PC-9 (cell line): ENCODE measurements at regions of chr7 and their contacts with region 1.

Region 1: GRCh38 chr7:12771378-12771877 is 84.0 kb downstream of the ARL4A start:
- DNase-seq: no peak
- H3K4me3 ChIP-seq: no peak overlapping the region
- H3K27ac ChIP-seq: no peak overlapping the region
- H3K4me1 ChIP-seq: no peaks in the 10 kb centered on the region
- H3K27me3 ChIP-seq: no peaks in the 10 kb centered on the region
- CTCF ChIP-seq: no peak

Region 2: GRCh38 chr7:11274074-11274473 is 1497.4 kb before region 1 on chr7:
- CTCF ChIA-PET with region 1: interaction called, 11 read pairs
- POLR2A ChIA-PET with region 1: no interaction called
- intact Hi-C with region 1: no loop called
- DNase-seq: no peak
- H3K4me3 ChIP-seq: no peak overlapping the region
- H3K27ac ChIP-seq: no peak overlapping the region
- H3K4me1 ChIP-seq: no peaks in the 10 kb centered on the region
- H3K27me3 ChIP-seq: no peaks in the 10 kb centered on the region
- CTCF ChIP-seq: no peak

Region 3: DNA sequence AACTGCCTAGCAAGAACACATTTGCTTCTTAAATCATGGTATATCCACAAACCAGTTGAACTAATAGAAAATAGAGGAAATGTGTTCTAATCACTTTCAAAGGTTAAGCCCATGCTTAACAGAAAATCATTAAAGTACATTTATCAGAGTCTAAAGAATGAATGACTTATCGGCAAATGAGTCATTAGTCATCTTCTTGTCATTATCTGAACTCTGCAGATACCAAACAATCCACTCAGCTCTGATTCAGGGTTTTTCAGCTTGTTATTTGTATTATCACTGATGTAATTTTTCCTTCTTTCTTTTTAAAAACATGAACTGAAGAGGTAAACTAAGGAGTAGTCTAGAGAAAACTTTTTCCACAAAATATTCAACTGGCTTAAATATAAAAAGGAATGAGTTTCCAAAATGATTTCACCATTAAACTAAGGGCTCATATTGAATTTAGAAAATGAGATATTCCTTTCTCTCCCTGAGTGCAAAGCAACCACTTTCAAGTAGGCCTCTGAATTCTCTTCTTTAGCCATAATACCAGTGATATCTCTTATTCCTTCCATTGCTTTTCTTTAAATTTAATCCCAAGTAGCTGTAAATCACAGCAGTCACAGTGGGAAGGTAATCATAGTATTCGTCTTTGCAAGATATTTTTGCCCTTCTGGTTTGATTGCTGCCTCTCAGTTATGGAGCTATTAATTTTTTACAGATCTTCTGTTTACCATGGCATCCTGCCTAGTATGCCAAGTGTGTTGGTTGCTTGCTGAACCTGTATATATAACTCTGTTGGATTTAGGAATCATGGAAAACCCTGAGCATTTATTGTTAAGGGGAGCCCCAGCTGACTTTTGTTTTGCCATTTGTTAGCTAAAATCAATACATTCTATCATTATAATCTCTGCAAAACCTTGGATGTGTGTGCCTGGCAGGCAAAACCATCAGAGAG is 1064.5 kb before region 1 on chr7:
- CTCF ChIA-PET with region 1: no interaction called
- POLR2A ChIA-PET with region 1: interaction called, 51 read pairs
- intact Hi-C with region 1: no loop called
- DNase-seq: no peak
- H3K4me3 ChIP-seq: no peak overlapping the region
- H3K27ac ChIP-seq: no peak overlapping the region
- H3K4me1 ChIP-seq: peaks cover 14% of the 10 kb centered on the region
- H3K27me3 ChIP-seq: no peaks in the 10 kb centered on the region
- CTCF ChIP-seq: no peak

Region 4: DNA sequence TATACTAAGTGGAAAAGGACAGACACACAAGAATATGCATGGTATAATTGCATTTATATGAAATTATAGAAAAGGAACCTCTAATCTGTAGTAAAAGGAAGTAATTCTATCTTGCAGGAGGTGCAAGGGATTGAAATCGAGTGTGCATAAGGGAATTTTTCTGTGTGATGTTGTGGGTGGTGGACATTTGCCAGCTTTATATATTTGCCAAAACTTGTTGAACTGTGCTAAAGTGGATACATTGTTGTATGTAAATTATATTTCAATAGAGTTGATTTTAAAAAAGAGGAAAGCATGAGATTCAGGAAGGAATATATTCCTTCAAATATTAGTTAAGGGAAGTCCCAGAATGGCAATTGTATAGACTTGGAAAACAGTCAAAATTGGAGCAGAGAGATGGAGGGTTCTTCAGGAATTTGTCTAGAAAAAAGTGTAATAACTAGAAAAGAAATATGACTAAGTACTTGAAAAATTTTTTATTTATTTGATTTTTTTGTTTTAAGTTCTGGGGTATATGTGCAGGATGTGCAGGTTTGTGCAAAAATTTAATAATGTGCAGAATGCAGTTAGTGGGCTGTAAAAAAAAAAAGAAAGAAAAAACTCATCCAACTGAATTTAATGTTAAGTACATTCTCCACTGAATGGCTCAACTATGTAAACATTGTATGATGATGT is 12.1 kb after region 1 on chr7:
- CTCF ChIA-PET with region 1: no interaction called
- POLR2A ChIA-PET with region 1: no interaction called
- intact Hi-C with region 1: no loop called
- DNase-seq: no peak
- H3K4me3 ChIP-seq: no peak overlapping the region
- H3K27ac ChIP-seq: no peak overlapping the region
- H3K4me1 ChIP-seq: no peaks in the 10 kb centered on the region
- H3K27me3 ChIP-seq: no peaks in the 10 kb centered on the region
- CTCF ChIP-seq: no peak

Region 5: GRCh38 chr7:12802098-12802497 is 30.7 kb after region 1 on chr7:
- CTCF ChIA-PET with region 1: no interaction called
- POLR2A ChIA-PET with region 1: no interaction called
- intact Hi-C with region 1: no loop called
- DNase-seq: peak in 1 of 2 experiments; percentile 66
- H3K4me3 ChIP-seq: peak overlapping the region; percentile 29
- H3K27ac ChIP-seq: peak overlapping the region; percentile 45
- H3K4me1 ChIP-seq: peaks cover 30% of the 10 kb centered on the region
- H3K27me3 ChIP-seq: no peaks in the 10 kb centered on the region
- CTCF ChIP-seq: no peak